Dendritic cell treated with granulocyte-macrophage colony-stimulating factor and Interleukin-4, amounts not matched to agents 40 ng/mL and 50 ng/mL, for 4 days (primary cell): ENCODE measurements at regions of chr1 and their contacts with region 1.

Region 1: DNA sequence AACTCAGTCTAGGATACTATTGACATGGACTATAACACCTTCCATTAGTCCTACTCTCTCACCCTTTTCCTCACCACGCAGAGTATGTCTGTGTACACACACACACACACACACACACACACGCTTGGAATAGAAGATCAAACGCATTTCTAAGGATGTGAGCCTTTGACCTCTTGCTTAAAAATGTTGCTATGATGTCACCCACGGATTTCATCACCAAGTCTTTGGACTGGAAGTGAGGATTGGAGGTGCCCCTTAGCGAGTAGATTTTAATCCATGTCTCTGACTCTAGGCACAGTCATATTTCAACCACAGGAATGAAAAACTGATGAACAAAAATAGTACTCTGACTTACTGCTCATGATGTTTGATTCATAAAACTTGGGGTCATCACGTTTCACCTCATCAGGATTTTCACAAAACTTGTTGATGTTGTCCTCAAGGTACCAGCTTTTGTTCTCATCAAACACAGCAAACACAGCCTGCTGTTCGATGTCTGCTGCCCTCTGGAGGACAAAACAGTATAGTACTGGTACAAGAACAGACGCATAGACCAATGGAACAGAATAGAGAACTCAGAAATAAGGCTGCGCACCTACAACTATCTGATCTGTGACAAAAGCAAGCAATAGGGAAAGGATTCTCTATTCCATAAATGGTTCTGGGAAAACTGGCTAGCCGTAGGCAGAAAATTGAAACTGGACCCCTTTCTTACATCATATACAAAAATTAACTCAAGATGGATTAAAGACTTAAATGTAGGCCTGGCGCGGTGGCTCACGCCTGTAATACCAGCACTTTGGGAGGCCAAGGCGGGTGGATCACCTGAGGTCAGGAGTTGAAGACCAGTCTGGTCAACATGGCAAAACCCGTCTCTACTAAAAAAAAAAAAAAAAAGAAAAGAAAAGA is 39.9 kb downstream of the F5 start:
- H3K4me3 Mint-ChIP-seq: no peak overlapping the region
- H3K27ac Mint-ChIP-seq: no peak overlapping the region
- H3K4me1 Mint-ChIP-seq: no peaks in the 10 kb centered on the region
- H3K27me3 Mint-ChIP-seq: no peaks in the 10 kb centered on the region

Region 2: GRCh38 chr1:169390303-169390702 is 156.0 kb before region 1 on chr1:
- intact Hi-C with region 1: loop called (anchors 10 kb)
- H3K4me3 Mint-ChIP-seq: no peak overlapping the region
- H3K27ac Mint-ChIP-seq: no peak overlapping the region
- H3K4me1 Mint-ChIP-seq: no peaks in the 10 kb centered on the region
- H3K27me3 Mint-ChIP-seq: no peaks in the 10 kb centered on the region

Region 3: DNA sequence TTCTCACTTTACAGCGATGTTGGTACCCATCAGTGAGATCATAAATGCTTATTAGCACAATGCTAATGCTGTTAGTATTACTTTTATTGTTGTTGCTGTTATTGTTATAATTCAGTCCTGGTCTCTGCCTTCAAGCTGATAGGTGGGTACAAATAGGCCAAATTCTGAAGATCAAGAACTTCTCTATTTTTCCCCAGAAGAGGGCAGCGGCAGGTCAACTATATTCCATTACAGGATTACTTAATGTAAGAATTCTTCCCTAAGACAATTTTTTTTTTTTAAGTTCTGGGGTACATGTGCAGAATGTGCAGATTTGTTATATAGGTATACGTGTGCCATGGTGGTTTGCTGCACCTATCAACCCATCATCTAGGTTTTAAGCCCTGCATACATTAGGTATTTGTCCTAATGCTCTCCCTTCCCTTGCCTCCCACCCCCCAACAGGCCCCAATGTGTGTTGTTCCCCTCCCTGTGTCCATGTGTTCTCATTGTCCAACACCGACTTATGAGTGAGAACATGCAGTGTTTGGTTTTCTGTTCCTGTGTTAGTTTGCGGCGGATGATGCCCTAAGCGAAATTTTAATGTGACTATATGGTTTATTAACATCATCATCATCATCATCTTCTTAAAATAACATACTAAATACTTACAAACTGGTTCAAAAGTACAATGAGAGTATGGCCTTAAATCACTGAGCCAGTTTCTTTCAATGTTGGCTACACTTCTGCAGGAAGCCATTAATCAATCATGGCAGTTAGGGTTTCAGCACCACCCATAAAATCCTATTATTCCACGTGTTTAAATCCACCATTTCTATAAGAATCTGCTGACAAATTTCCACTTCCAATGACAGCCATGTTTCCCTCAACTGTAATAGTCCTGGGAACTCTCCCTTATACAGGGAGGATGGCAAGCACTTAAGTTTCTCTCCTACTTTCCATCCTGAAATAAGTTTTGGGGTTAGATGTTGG is 79.8 kb before region 1 on chr1:
- intact Hi-C with region 1: loop called (anchors 1 kb)
- H3K4me3 Mint-ChIP-seq: no peak overlapping the region
- H3K27ac Mint-ChIP-seq: no peak overlapping the region
- H3K4me1 Mint-ChIP-seq: no peaks in the 10 kb centered on the region
- H3K27me3 Mint-ChIP-seq: no peaks in the 10 kb centered on the region

Region 4: GRCh38 chr1:169680377-169681019 is 134.2 kb after region 1 on chr1:
- intact Hi-C with region 1: no loop called
- H3K4me3 Mint-ChIP-seq: no peak overlapping the region
- H3K27ac Mint-ChIP-seq: no peak overlapping the region
- H3K4me1 Mint-ChIP-seq: peaks cover 13% of the 10 kb centered on the region
- H3K27me3 Mint-ChIP-seq: no peaks in the 10 kb centered on the region

Region 5: DNA sequence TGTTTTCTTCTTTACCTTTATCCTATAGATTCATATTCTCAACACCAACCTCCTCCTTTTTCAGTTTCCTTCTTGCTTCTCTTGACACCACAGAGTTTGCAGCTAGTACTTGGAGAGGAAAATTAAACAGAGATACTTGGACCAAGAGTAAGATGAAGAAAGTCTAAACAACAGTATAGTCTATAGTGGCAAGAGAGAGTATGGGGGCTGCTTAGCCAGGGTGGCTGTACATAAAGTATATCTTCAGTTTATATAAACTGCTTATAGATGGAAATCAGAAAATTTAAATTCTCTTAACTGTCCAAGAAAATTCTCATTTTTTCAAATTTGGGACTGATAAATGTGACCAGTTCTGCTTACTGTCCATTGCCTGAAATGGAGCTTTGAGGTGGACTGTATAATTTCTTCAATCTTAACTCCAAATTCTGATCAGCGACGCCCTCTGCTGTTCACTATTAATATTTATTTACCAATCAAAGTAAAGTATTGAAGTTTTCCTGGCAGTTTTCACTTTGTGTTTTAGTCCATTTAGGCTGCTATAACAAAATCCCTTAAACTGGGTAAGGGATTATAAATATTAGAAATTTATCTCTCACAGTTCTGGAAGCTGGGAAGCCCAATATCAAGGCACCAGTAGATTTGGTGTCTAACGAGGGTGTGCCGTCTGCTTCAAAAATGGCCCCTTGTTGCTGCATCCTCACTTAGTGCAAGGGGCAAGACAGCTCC is 263.2 kb after region 1 on chr1:
- intact Hi-C with region 1: loop called (anchors 1 kb)
- H3K4me3 Mint-ChIP-seq: no peak overlapping the region
- H3K27ac Mint-ChIP-seq: no peak overlapping the region
- H3K4me1 Mint-ChIP-seq: no peaks in the 10 kb centered on the region
- H3K27me3 Mint-ChIP-seq: no peaks in the 10 kb centered on the region